Esophagus muscularis mucosa (tissue), 4 donors: ENCODE measurements at regions of chr10 and their contacts with region 1.

Region 1: DNA sequence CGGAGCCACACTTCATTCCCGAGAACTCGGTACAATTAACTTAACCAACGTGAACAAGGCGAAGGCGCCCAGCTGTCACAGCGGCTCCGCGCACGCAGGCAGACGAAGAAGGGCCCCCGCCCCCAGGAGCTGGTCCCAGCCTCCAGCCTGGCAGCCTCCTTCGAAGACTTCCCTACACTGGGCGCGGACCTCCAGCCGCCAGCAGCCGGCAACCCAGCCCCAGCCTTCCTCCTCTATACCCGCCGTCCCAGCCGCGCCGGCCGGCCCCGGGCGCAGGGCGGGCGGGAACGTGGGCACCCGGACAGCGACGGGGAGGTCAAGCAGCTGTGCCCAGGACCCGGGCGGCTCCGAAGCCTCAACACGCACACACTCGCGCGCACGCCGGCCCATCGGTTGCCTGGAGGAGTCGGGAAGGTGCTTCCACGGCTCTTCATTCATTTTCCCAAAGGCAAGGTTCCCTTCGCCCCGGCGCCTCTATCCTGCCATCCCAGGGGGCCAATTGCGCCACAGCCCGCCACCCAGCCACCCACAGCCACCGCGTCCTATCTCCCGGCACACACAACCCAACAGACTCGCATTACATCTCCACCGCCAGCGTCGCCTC is 1.6 kb downstream of the CHST15 start:
- DNase-seq: no peak
- H3K4me3 ChIP-seq: peak overlapping the region; percentile 77 to 87 (median 80)
- H3K27ac ChIP-seq: peak overlapping the region; percentile 93 to 96 (median 96)
- H3K4me1 ChIP-seq: peaks cover 17 to 85% (median 78%) of the 10 kb centered on the region in 4 donors
- H3K27me3 ChIP-seq: no peaks in the 10 kb centered on the region
- CTCF ChIP-seq: no peak
- EP300 ChIP-seq: no peak
- POLR2A ChIP-seq: no peak

Region 2: GRCh38 chr10:124000792-124001201 is 91.0 kb before region 1 on chr10:
- intact Hi-C with region 1: loop called (anchors 2 kb)
- DNase-seq: peak; percentile 85
- H3K4me3 ChIP-seq: no peak overlapping the region
- H3K27ac ChIP-seq: peak overlapping the region in 3 of 4 donors; percentile 40 to 95 (median 50)
- H3K4me1 ChIP-seq: peaks cover 7 to 50% (median 45%) of the 10 kb centered on the region in 4 donors
- H3K27me3 ChIP-seq: no peaks in the 10 kb centered on the region
- CTCF ChIP-seq: no peak
- EP300 ChIP-seq: no peak
- POLR2A ChIP-seq: no peak

Region 3: GRCh38 chr10:124043310-124044142 is 48.2 kb before region 1 on chr10:
- intact Hi-C with region 1: loop called (anchors 5 kb)
- DNase-seq: no peak
- H3K4me3 ChIP-seq: no peak overlapping the region
- H3K27ac ChIP-seq: peak overlapping the region; percentile 44 to 81 (median 76)
- H3K4me1 ChIP-seq: peaks cover 3 to 94% (median 84%) of the 10 kb centered on the region in 4 donors
- H3K27me3 ChIP-seq: no peaks in the 10 kb centered on the region
- CTCF ChIP-seq: no peak
- EP300 ChIP-seq: no peak
- POLR2A ChIP-seq: no peak